ENCODE measurements at regions of chr12 and their contacts with region 1.

Region 1: DNA sequence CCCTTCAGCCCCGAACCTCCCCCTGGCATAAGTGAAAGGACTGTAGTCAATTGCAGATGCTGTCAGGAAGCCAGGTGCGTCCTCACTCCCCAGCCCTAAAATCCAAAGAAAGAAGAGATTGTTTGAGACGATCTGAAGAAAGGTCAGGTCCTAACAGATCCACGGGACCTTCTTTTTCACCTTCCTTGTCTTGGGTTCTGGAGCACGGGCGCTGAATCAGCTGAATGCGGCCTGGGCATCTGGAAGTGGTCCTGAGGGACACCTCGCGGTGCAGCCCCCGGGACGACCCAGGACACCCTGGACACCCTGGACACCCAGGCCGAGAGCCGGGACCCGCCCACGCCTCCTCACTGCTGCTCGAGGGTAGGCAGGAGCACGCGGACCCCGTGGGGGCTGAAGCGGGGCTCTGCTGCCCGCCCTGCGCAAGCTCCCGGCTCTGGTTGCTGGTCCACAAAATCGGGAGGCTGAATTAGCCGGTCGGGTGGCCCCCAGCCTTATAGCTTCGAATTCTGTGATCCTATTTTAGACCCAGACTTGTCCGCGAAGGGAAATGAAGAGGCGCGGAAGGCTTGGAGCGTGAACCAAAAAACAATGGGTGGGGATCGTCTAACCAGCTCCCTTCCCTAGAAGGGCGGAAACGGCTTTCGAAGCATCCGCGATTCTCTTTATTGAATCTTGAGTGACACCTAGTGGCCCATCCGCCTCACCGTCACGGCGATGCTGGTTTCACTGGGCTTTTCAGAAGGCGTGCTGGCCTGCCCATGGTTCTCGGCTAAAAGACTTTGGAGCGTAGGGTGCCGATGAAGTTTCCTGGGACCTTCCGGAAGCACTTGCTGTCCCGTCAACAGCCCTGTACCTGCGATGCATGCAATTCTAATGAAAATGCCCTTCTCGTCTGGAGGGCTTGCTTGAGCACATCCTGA is 46.4 kb upstream of the PLXNC1 start:
- DNase-seq: peak; percentile 82 to 89
- H3K4me3 ChIP-seq: peak overlapping the region; percentile 14 to 68 (median 53)
- H3K27ac ChIP-seq: no peak overlapping the region
- H3K4me1 ChIP-seq: peaks cover 0 to 4% (median 1%) of the 10 kb centered on the region in 4 experiments; a peak in 4 of 7 replicates
- H3K27me3 ChIP-seq: peaks cover 0 to 12% (median 8%) of the 10 kb centered on the region in 4 experiments; a peak in 5 of 7 replicates
- CTCF ChIP-seq: peak; percentile 80 to 90 (median 88)
- EP300 ChIP-seq: no peak
- POLR2A ChIP-seq: no peak
- RAD21 ChIP-seq: peak; percentile 91 to 96

Region 2: DNA sequence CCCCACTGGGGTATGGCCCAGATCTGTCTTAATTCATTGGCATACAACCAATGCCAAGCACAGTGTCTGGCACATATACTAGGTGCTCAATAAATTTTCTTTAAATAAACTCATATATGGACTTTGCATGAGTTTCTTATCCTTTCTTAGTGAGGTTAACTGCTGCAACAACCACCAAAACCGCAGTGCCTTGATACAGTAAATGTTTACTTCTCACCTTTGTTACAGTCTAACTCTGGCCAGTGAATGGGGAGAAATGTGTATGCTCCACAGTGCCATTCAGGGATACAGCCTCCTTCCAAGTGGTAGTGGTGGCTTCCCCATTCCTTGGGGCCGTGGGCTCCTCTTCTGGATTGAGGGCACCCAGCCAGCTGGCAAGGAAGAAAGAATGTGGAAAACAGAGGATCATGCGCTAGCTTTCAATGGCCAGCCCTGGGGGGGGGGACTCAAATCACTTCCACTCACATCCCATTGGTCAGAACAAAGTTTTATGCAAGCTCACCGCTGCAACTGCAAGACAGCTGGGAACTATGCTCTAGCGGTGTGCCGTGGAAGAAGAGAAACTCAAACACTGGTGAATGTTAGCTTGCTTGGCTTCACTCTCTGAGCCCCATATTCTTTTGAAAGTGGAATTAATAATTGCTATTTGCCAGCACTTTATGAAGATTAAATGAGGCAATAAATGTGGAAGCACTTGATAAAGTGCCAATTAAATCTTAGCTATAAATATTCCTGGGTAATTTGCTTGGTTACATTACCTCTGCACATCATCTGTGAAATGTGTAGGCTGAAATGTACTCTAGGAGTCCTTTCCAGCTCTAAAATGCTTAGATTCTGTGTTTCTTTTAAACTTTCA is 580.5 kb before region 1 on chr12:
- CTCF ChIA-PET with region 1: interaction called, 48 read pairs
- POLR2A ChIA-PET with region 1: no interaction called
- DNase-seq: no peak
- H3K4me3 ChIP-seq: no peak overlapping the region
- H3K27ac ChIP-seq: no peak overlapping the region
- H3K4me1 ChIP-seq: no peaks in the 10 kb centered on the region; a peak in 3 of 7 replicates
- H3K27me3 ChIP-seq: no peaks in the 10 kb centered on the region
- CTCF ChIP-seq: no peak
- EP300 ChIP-seq: no peak
- POLR2A ChIP-seq: no peak
- RAD21 ChIP-seq: no peak

Region 3: DNA sequence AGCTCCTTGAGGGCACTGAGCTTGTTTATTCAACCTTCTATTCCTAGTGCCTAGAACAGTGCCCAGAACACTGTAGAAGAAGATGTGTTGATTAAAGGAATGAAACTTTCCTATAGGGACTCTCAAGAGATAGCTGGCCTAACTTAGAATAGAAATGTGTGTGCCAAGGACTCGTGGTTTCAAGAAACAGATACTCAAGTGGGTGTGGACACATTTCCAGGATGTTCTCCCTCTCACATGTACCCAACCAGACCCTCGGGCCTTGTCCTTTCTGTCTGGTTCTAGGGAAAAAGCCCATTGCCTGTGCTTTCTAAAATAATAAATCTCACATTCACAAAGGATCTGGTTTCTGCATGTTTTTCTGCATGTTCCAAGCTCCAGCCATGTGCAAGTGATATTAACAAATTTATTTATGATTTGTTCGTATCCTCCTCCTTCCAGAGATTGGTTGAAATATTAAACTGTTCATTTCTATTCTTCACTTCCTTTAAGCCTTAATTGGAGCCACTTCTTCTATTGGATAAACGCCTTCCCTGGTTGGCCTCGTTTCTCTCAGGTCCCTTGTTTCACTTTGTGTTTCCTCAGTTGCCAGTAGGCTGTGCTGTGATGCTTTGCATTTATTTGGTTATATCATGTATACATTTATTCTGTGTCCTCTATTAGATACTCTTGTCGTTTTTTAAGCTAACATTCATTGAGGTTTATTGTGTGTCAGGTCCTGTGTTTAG is 335.0 kb before region 1 on chr12:
- CTCF ChIA-PET with region 1: interaction called, 84 read pairs
- POLR2A ChIA-PET with region 1: interaction called, 5 read pairs
- DNase-seq: no peak
- H3K4me3 ChIP-seq: no peak overlapping the region
- H3K27ac ChIP-seq: no peak overlapping the region
- H3K4me1 ChIP-seq: no peaks in the 10 kb centered on the region; a peak in 3 of 7 replicates
- H3K27me3 ChIP-seq: no peaks in the 10 kb centered on the region
- CTCF ChIP-seq: peak in 2 of 3 experiments; percentile 49 to 50; a peak in 2 of 4 replicates
- EP300 ChIP-seq: no peak
- POLR2A ChIP-seq: no peak
- RAD21 ChIP-seq: peak; percentile 69 to 80

Region 4: DNA sequence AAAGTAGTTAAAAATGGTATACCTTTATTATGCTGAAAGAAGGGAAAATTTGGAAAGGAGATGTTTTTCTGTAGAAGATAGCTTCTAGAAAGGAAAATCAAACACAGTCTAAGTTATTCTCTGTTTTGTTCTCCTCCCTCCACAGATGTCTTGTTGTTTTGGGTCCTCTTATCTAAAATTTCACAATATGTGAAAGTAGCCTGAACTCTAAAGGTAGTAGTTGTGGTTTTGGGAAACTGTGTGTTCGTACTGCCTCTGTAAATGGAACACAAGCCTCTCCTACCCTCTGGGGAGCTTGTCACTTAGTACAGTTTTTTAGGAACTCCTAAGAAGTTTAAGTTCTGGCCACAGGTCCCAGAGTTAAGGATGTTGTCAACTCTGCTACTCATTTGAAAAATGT is 312.2 kb before region 1 on chr12:
- CTCF ChIA-PET with region 1: no interaction called
- POLR2A ChIA-PET with region 1: no interaction called
- DNase-seq: no peak
- H3K4me3 ChIP-seq: no peak overlapping the region
- H3K27ac ChIP-seq: no peak overlapping the region
- H3K4me1 ChIP-seq: peaks cover 0 to 6% (median 3%) of the 10 kb centered on the region in 4 experiments; a peak in 2 of 7 replicates
- H3K27me3 ChIP-seq: no peaks in the 10 kb centered on the region
- CTCF ChIP-seq: no peak
- EP300 ChIP-seq: no peak
- POLR2A ChIP-seq: no peak
- RAD21 ChIP-seq: no peak

Region 5: GRCh38 chr12:93825931-93826555 is 276.0 kb before region 1 on chr12:
- CTCF ChIA-PET with region 1: interaction called, 18 read pairs
- POLR2A ChIA-PET with region 1: no interaction called
- DNase-seq: no peak
- H3K4me3 ChIP-seq: no peak overlapping the region
- H3K27ac ChIP-seq: no peak overlapping the region
- H3K4me1 ChIP-seq: peaks cover 2 to 10% (median 6%) of the 10 kb centered on the region in 4 experiments; a peak in 5 of 7 replicates
- H3K27me3 ChIP-seq: no peaks in the 10 kb centered on the region; a peak in 1 of 7 replicates
- CTCF ChIP-seq: no peak
- EP300 ChIP-seq: no peak
- POLR2A ChIP-seq: no peak
- RAD21 ChIP-seq: no peak

Region 6: GRCh38 chr12:93990832-93991803 is 110.9 kb before region 1 on chr12:
- CTCF ChIA-PET with region 1: interaction called, 56 read pairs
- POLR2A ChIA-PET with region 1: no interaction called
- DNase-seq: peak; percentile 31 to 60
- H3K4me3 ChIP-seq: no peak overlapping the region
- H3K27ac ChIP-seq: no peak overlapping the region
- H3K4me1 ChIP-seq: peaks cover 0 to 4% (median 2%) of the 10 kb centered on the region in 4 experiments; a peak in 5 of 7 replicates
- H3K27me3 ChIP-seq: no peaks in the 10 kb centered on the region
- CTCF ChIP-seq: peak; percentile 52 to 74 (median 63)
- EP300 ChIP-seq: no peak
- POLR2A ChIP-seq: no peak
- RAD21 ChIP-seq: peak; percentile 67 to 71

Region 7: DNA sequence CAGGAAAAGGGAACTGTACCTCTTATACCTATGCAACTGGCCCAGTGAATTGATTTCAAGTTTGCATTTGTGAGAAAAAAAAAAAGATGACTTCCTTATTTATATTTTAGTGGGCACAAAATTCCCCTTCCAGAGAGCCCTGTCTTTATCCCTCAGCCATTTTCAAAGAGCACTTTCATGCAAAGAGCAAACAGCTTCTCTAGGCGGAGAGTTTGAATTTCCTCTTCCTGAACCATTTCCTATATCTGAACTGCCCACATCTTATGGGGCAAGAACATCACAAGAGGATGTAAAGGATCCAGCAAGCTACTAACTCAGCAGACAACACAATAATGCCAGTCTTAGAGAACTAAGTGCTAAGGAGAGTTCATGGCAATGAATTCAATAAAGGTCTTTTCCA is 24.1 kb after region 1 on chr12:
- CTCF ChIA-PET with region 1: interaction called, 34 read pairs
- POLR2A ChIA-PET with region 1: no interaction called
- DNase-seq: no peak
- H3K4me3 ChIP-seq: no peak overlapping the region
- H3K27ac ChIP-seq: no peak overlapping the region
- H3K4me1 ChIP-seq: no peaks in the 10 kb centered on the region; a peak in 1 of 7 replicates
- H3K27me3 ChIP-seq: no peaks in the 10 kb centered on the region; a peak in 1 of 7 replicates
- CTCF ChIP-seq: no peak
- EP300 ChIP-seq: no peak
- POLR2A ChIP-seq: no peak
- RAD21 ChIP-seq: no peak